ENCODE measurements at regions of chr16 and their contacts with region 1.

Region 1: GRCh38 chr16:49337814-49338350 is 35.7 kb upstream of the C16orf78 start:
- DNase-seq: no peak
- H3K4me3 ChIP-seq: no peak overlapping the region
- H3K27ac ChIP-seq: no peak overlapping the region
- H3K4me1 ChIP-seq: peaks cover 48% of the 10 kb centered on the region
- CTCF ChIP-seq: no peak

Region 2: DNA sequence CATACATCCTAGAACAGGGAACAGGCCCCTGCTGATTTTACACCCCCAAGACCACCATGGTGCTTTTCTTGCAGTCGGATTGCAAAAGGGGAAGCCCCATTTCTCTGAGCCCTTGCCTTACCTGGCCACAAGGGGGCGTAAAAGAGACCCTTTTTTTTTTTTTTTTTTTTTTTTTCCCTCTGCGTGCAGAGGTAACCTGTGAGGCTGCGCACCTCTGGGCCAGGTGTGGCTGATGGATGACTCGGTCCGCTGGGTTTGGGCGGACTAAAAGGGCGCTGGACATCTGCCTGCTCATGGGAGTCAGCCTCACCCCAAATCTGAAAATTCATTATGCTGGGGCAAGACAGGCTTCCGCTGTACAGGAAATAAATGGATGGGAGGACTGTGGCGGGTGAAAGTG is 337.3 kb before region 1 on chr16:
- CTCF ChIA-PET with region 1: no interaction called
- POLR2A ChIA-PET with region 1: no interaction called
- intact Hi-C with region 1: no loop called
- DNase-seq: peak; percentile 37
- H3K4me3 ChIP-seq: no peak overlapping the region
- H3K27ac ChIP-seq: no peak overlapping the region
- H3K4me1 ChIP-seq: no peaks in the 10 kb centered on the region
- CTCF ChIP-seq: peak; percentile 88

Region 3: GRCh38 chr16:49194537-49195236 is 143.2 kb before region 1 on chr16:
- CTCF ChIA-PET with region 1: no interaction called
- POLR2A ChIA-PET with region 1: no interaction called
- intact Hi-C with region 1: no loop called
- DNase-seq: no peak
- H3K4me3 ChIP-seq: no peak overlapping the region
- H3K27ac ChIP-seq: no peak overlapping the region
- H3K4me1 ChIP-seq: no peaks in the 10 kb centered on the region
- CTCF ChIP-seq: no peak

Region 4: DNA sequence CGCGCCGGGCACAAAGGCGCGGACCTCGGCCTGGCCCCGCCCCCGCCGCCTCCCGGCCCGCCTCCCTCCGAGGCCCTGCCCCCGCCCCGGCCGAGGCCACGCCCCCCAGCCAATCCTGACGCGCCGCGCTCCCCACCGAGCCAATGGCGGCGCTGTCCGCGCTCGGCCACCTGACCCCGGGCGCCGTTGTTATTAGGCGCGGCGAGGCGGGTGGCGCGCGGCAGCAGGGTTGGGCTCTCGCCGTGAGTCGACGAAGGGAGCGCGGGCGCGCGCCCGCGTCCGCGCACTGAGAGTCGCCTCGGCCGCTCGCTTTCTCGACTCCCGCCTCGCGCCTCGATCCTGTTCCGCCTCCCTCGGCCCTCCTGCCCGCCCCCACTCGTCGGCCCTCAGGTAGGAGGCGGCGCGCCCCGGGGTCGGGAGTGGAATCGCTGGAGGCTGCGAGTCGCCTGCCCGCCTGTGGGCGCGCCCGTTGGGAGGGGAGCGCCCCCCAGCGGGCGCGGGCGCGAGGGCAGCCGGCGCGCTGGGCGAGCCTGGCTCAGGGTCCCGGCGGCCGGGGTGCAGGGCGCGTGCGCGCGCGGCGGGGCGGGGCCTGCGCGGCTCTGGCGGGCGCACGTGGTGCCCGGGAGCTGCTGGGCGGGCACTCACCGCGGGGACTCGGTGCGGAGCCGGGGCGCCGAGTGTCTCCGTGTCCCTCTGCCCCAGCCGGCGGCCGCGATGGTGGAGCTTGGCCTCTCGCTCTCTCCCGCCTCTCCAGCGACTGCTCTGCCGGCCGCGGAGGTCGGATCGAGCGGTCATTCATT is 55.8 kb before region 1 on chr16:
- CTCF ChIA-PET with region 1: no interaction called
- POLR2A ChIA-PET with region 1: no interaction called
- intact Hi-C with region 1: loop called (anchors 5 kb)
- DNase-seq: peak; percentile 97
- H3K4me3 ChIP-seq: peak overlapping the region; percentile 72
- H3K27ac ChIP-seq: peak overlapping the region; percentile 66
- H3K4me1 ChIP-seq: peaks cover 8% of the 10 kb centered on the region
- CTCF ChIP-seq: peak; percentile 63